Mucosa of descending colon (tissue), 3 donors: ENCODE measurements at regions of chr6 and their contacts with region 1.

Region 1: GRCh38 chr6:144582939-144583613 is 297.9 kb downstream of the UTRN start:
- DNase-seq: peak; percentile 30 to 53 (median 44)
- ATAC-seq: peak; percentile 73
- H3K4me3 ChIP-seq: no peak overlapping the region
- H3K4me1 ChIP-seq: peaks cover 6% of the 10 kb centered on the region
- CTCF ChIP-seq: no peak

Region 2: GRCh38 chr6:144566868-144567615 is 16.0 kb before region 1 on chr6:
- intact Hi-C with region 1: no loop called
- DNase-seq: no peak
- ATAC-seq: no peak
- H3K4me3 ChIP-seq: no peak overlapping the region
- H3K4me1 ChIP-seq: no peaks in the 10 kb centered on the region
- CTCF ChIP-seq: no peak

Region 3: DNA sequence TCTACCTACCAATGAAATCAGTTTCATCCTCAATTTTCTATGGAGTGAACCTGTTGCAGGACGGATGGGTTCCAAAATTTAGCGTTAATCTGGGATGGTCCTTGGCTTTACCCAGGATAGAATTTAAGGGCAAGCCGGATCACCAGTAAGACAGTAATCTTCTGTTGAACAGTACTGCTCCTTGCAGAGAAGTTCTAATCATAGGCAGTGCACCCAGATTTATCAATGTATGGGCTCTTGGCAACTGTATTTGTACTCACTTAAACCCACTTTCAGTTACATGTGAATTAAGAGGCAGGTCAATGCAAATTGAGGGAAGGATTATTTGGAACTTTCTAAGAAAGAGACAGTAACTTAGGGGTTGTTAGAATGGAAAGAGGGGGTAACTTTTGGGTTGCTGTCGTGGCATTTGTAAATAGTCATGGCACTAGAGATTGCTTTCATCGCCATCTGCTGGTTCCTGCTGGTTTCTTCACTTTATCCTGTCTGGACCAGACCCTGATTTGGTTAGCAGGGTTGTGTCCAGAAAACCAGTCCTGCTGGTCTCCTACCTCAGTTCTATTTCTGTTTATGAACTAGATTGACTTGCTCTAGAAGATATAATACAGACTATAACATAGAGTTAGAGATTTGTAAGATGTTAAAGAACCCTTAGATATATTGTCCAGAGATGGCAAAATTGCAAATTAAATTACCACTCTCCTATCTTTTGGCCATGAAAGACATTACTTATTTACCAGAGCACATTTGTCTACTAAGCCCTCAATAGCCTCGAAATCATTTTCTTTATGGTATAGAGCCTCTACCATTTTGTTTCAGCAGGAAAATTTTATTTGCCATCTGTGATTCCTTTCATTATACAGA is 348.3 kb after region 1 on chr6:
- intact Hi-C with region 1: loop called in 1 of 2 experiments (anchors 5 kb)
- DNase-seq: peak in 1 of 3 donors; percentile 71
- ATAC-seq: peak; percentile 54
- H3K4me3 ChIP-seq: no peak overlapping the region
- H3K4me1 ChIP-seq: no peaks in the 10 kb centered on the region
- CTCF ChIP-seq: no peak

Region 4: DNA sequence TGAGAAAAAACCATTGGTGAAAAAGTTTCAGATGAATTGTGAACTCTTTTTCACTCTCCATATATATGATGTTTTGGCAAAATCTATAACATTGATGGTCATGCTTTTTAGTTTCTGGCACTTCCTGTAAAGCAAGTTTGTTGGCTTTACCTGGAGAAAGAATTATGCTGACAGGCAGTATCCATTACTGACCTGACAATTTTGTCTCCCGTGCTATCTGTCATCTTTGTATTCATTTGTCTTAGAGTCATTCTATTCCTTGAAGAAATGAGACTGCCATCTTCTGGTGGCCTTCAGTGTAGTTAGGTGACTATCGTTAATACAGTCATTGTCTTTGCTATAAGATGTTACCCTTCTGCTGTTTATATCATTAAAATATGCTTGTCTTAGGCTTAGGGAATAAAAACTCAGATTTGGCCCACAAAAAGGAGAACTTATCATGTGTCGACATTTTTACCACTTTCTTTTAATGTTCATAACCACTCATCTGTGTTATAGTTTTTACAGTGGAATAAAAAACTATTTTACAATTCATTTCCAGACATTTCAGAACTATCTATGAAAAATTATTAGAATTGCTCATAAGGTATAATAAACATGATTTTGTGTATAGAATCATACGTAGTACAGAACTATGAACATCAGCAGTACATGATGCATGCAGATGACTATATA is 445.2 kb after region 1 on chr6:
- intact Hi-C with region 1: loop called in 1 of 2 experiments (anchors 5 kb)
- DNase-seq: peak in 1 of 3 donors; percentile 71
- ATAC-seq: peak; percentile 55
- H3K4me3 ChIP-seq: no peak overlapping the region
- H3K4me1 ChIP-seq: no peaks in the 10 kb centered on the region
- CTCF ChIP-seq: no peak

Region 5: GRCh38 chr6:145044641-145045246 is 461.7 kb after region 1 on chr6:
- intact Hi-C with region 1: no loop called
- DNase-seq: no peak
- ATAC-seq: no peak
- H3K4me3 ChIP-seq: no peak overlapping the region
- H3K4me1 ChIP-seq: no peaks in the 10 kb centered on the region
- CTCF ChIP-seq: no peak

Region 6: GRCh38 chr6:145214570-145214969 is 631.5 kb after region 1 on chr6:
- intact Hi-C with region 1: loop called in 1 of 2 experiments (anchors 10 kb)
- DNase-seq: peak in 1 of 3 donors; percentile 23
- ATAC-seq: no peak
- H3K4me3 ChIP-seq: no peak overlapping the region
- H3K4me1 ChIP-seq: no peaks in the 10 kb centered on the region
- CTCF ChIP-seq: no peak